CD8-positive, alpha-beta T cell (primary cell): ENCODE measurements at regions of chr2 and their contacts with region 1.

Region 1: GRCh38 chr2:218360447-218360846 is 3.8 kb downstream of the CATIP start:
- DNase-seq: peak in 1 of 9 experiments; percentile 17
- ATAC-seq: no peak
- H3K4me3 ChIP-seq: no peak overlapping the region
- H3K4me3 Mint-ChIP-seq: no peak overlapping the region
- H3K27ac ChIP-seq: no peak overlapping the region
- H3K27ac Mint-ChIP-seq: no peak overlapping the region
- H3K4me1 ChIP-seq: no peaks in the 10 kb centered on the region
- H3K4me1 Mint-ChIP-seq: peaks cover 3% of the 10 kb centered on the region
- H3K27me3 ChIP-seq: no peaks in the 10 kb centered on the region
- H3K27me3 Mint-ChIP-seq: no peaks in the 10 kb centered on the region
- CTCF ChIP-seq: no peak

Region 2: DNA sequence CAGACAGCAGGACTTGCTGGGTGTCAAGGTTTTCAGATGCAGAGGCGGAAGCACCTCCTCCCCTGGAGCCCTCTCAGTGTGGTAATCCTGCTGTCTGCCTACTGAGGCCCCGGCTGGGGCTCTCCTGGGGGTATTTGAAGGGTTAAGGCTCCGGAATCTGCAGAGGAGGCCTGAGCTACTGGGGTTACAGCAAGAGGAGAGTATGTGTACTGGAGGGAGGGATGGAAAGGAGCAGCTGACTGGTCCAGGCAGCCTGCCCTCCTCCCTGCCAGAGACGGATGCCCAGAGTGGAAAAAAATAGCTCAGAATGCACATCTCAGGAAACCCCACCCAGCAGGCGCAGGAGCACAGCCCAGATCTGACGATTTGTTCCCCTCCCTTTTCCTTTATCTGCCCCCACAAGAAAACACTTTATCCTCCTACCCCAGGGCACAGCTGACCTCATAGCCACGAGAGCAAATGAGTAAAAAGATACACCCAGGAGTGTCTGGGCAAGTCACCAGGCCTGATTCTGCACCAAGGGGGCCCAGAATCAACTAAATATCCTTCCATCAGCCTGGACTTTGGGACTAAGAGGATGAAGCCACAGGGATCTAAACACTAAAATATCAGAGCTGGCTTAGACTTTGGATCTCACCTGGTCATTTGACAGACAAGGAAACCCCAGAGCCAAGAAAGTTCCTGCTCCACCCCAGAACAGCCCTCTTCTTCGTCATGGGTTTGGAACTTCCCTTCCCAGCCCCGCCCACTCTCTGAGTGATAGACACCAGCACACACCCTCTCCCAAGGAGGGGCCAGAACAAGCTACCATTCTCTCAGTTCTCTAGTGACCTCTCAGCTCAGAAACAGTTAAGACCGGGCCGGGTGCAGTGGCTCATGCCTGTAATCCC is 73.6 kb before region 1 on chr2:
- CTCF ChIA-PET with region 1: interaction called, 338 read pairs
- POLR2A ChIA-PET with region 1: interaction called, 3 read pairs
- intact Hi-C with region 1: loop called (anchors 2 kb)
- DNase-seq: peak; percentile 56 to 97 (median 80)
- ATAC-seq: peak; percentile 62
- H3K4me3 ChIP-seq: peak overlapping the region; percentile 51 to 60
- H3K4me3 Mint-ChIP-seq: peak overlapping the region; percentile 90
- H3K27ac ChIP-seq: peak overlapping the region; percentile 87 to 99
- H3K27ac Mint-ChIP-seq: peak overlapping the region; percentile 100
- H3K4me1 ChIP-seq: peaks cover 93% of the 10 kb centered on the region
- H3K4me1 Mint-ChIP-seq: peaks cover 78% of the 10 kb centered on the region
- H3K27me3 ChIP-seq: no peaks in the 10 kb centered on the region
- H3K27me3 Mint-ChIP-seq: no peaks in the 10 kb centered on the region
- CTCF ChIP-seq: no peak

Region 3: GRCh38 chr2:218301176-218301819 is 59.1 kb before region 1 on chr2:
- CTCF ChIA-PET with region 1: interaction called, 338 read pairs
- POLR2A ChIA-PET with region 1: interaction called, 5 read pairs
- intact Hi-C with region 1: loop called (anchors 1 kb)
- DNase-seq: peak; percentile 78 to 93 (median 89)
- ATAC-seq: peak; percentile 98
- H3K4me3 ChIP-seq: no peak overlapping the region
- H3K4me3 Mint-ChIP-seq: no peak overlapping the region
- H3K27ac ChIP-seq: no peak overlapping the region
- H3K27ac Mint-ChIP-seq: no peak overlapping the region
- H3K4me1 ChIP-seq: no peaks in the 10 kb centered on the region
- H3K4me1 Mint-ChIP-seq: peaks cover 6% of the 10 kb centered on the region
- H3K27me3 ChIP-seq: no peaks in the 10 kb centered on the region
- H3K27me3 Mint-ChIP-seq: no peaks in the 10 kb centered on the region
- CTCF ChIP-seq: peak; percentile 83

Region 4: GRCh38 chr2:218322895-218323808 is 37.3 kb before region 1 on chr2:
- CTCF ChIA-PET with region 1: interaction called, 33 read pairs
- POLR2A ChIA-PET with region 1: no interaction called
- intact Hi-C with region 1: loop called in 1 of 2 experiments (anchors 5 kb)
- DNase-seq: peak; percentile 9 to 71 (median 45)
- ATAC-seq: peak; percentile 70
- H3K4me3 ChIP-seq: peak overlapping the region; percentile 39 to 48
- H3K4me3 Mint-ChIP-seq: peak overlapping the region; percentile 86
- H3K27ac ChIP-seq: peak overlapping the region in 1 of 2 experiments; percentile 48
- H3K27ac Mint-ChIP-seq: peak overlapping the region; percentile 77
- H3K4me1 ChIP-seq: peaks cover 47% of the 10 kb centered on the region
- H3K4me1 Mint-ChIP-seq: peaks cover 56% of the 10 kb centered on the region
- H3K27me3 ChIP-seq: peaks cover 0 to 3% of the 10 kb centered on the region in 2 experiments
- H3K27me3 Mint-ChIP-seq: peaks cover 4% of the 10 kb centered on the region
- CTCF ChIP-seq: no peak